ENCODE measurements at regions of chr16 and their contacts with region 1.

Region 1: DNA sequence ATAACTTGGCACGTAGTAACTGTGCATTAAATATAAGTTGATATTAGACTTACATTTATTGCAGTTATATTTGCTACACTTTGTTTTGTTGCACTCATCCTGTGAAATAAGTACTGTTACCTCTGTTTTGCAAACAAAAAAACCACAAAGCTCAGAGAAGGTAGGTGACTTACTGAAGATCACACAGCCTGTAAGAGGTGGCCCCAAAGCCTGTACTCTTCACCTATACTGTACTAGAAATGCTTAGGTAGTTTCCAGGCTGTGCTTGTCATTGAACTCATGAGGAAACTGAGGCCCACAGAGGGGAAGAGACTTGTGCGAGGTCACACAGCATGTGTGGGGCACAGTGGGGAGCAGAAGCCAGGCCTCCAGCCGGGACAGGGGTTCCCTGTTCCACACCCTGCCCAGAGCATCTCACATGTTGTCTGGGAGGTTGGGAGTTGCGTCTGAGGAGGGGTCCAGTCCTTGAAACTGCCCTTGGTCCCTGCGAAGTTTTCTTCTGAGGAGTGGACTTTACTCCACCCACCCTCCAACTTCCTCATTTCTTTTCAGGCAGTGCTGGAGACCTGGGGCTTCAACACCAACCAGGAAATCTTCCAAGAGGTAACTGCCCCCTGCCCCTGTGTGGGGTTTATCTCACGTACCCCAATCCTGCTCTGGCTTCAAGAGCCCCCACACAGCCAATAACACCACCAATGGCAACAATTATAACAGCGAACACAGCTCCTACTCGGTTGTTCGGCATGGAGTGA is 13.0 kb downstream of the CETP start:
- DNase-seq: no peak
- H3K4me3 ChIP-seq: no peak overlapping the region
- H3K27ac ChIP-seq: no peak overlapping the region
- H3K4me1 ChIP-seq: no peaks in the 10 kb centered on the region
- H3K27me3 ChIP-seq: no peaks in the 10 kb centered on the region
- CTCF ChIP-seq: no peak

Region 2: GRCh38 chr16:58591083-58591482 is 1616.4 kb after region 1 on chr16:
- intact Hi-C with region 1: loop called (anchors 5 kb)
- DNase-seq: no peak
- H3K4me3 ChIP-seq: no peak overlapping the region
- H3K27ac ChIP-seq: no peak overlapping the region
- H3K4me1 ChIP-seq: no peaks in the 10 kb centered on the region
- H3K27me3 ChIP-seq: no peaks in the 10 kb centered on the region
- CTCF ChIP-seq: no peak